ENCODE measurements at regions of chrX and their contacts with region 1.

Region 1: GRCh38 chrX:41789374-41789773 is 65.4 kb downstream of the GPR82 start:
- DNase-seq: no peak
- H3K4me3 ChIP-seq: no peak overlapping the region
- CTCF ChIP-seq: no peak

Region 2: GRCh38 chrX:41799661-41800060 is 10.3 kb after region 1 on chrX:
- CTCF ChIA-PET with region 1: interaction called, 11 read pairs
- POLR2A ChIA-PET with region 1: no interaction called
- DNase-seq: no peak
- H3K4me3 ChIP-seq: no peak overlapping the region
- CTCF ChIP-seq: no peak

Region 3: GRCh38 chrX:42020225-42020624 is 230.9 kb after region 1 on chrX:
- CTCF ChIA-PET with region 1: no interaction called
- POLR2A ChIA-PET with region 1: no interaction called
- DNase-seq: no peak
- H3K4me3 ChIP-seq: no peak overlapping the region
- CTCF ChIP-seq: no peak

Measured in AG04449 (cell line).